ENCODE measurements at regions of chr1 and their contacts with region 1.

Region 1: DNA sequence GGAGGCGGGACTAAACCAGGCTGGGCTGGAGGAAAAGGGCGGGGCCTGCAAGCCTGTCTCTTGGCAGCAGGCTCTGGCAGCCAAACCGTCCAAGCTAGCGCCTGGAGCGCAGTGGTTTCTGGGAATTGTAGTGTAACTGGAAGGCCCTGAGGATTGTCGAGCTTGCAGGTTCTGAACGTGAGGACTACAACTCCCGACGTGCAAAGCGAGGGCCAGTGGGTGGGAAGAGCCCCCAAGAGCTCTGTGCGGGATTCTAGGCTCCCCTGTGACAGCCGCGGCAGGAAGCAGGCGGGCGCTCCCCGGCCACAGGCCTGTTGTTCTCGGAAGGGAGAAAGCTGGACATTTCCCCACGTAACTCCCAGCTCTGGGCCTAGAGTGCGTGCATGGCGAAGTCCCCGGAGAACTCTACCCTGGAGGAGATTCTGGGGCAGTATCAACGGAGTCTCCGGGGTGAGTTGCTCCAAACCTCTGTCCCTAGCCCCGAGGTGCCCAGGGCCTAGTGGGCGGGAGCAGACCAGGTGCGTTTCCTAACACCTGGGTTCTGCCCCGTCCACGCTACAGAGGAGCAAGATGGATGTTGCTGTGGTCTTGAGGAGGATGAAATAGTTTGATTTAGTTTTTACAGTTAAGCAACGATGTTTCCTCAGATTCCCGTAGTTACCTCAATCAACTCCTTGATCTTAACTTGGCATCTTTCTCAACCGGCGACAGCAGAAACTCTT is at the start of gene SDCCAG8:
- DNase-seq: peak; percentile 96

Region 2: GRCh38 chr1:242966892-242967291 is 289.1 kb before region 1 on chr1:
- CTCF ChIA-PET with region 1: no interaction called
- POLR2A ChIA-PET with region 1: no interaction called
- DNase-seq: no peak

Region 3: GRCh38 chr1:243234978-243235647 is 20.8 kb before region 1 on chr1:
- CTCF ChIA-PET with region 1: interaction called, 3 read pairs
- POLR2A ChIA-PET with region 1: interaction called, 12 read pairs
- DNase-seq: no peak

Measured in HEK293T (cell line).